Activated T-helper 1 cell treated with anti-CD3 and anti-CD28 coated beads, Interleukin-12 subunit alpha, Interleukin-12 subunit beta, Interleukin-2, Interleukin-4 antibody, amounts not matched to agents 30 ng/mL and 10 ng/mL and 1 ng/mL, durations not matched to agents 14 hours and 24 hours and 36 hours (primary cell): ENCODE measurements at regions of chr9 and their contacts with region 1.

Region 1: DNA sequence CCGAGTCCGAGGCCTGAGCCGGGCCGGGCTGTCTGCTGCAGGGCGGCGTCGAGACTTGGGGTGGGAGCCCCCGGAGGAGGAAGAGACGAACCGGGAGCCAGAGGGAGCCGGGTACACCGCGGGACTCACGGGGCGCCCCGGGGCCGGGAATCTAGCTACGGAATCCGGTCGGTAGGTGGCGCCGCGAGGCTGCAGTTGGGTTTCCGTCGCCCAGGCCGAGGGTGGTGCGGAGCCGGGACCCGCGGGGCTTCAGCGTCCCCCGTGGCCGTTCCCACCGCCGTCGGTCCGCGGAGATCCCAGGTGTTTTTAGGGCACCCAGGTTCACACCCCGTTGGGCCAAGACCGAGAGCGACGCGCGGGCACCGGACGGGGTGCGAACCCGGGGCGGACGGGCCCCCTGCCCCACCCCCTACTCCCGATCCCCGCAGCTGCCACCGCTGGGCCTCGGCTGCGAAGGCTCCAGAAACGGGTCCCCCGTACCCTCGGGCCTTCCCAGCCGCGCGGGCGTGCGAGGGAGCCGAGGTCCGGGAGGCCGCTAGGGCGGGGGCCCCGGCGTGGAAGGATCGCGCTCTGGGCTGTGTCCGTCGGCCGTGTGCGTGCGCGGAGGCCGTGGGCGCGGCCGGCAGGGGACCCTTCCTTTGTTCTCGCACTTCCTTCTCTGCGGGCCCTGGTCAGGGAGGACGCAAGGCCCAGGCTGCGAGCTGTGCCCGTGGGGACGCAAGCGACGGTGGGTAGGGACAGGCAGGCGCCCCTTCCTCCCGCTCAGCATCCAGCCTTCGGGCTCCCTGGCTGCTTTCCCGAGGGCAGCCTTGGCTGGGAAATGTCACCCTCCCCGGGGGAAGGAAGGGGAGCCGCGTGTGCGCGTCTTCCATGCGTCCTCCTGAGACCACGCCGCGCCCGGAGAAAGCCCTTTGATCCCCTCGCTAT is 146.6 kb downstream of the GAPVD1 start:
- DNase-seq: peak; percentile 53
- H3K4me3 Mint-ChIP-seq: peak overlapping the region; percentile 79
- H3K27ac Mint-ChIP-seq: no peak overlapping the region
- H3K4me1 Mint-ChIP-seq: peaks cover 7% of the 10 kb centered on the region
- H3K27me3 Mint-ChIP-seq: peaks cover 15% of the 10 kb centered on the region

Region 2: GRCh38 chr9:125558453-125559092 is 150.3 kb after region 1 on chr9:
- intact Hi-C with region 1: loop called (anchors 2 kb)
- DNase-seq: peak; percentile 31
- H3K4me3 Mint-ChIP-seq: no peak overlapping the region
- H3K27ac Mint-ChIP-seq: no peak overlapping the region
- H3K4me1 Mint-ChIP-seq: peaks cover 18% of the 10 kb centered on the region
- H3K27me3 Mint-ChIP-seq: no peaks in the 10 kb centered on the region

Region 3: GRCh38 chr9:126228781-126229444 is 820.7 kb after region 1 on chr9:
- intact Hi-C with region 1: loop called (anchors 1 kb)
- DNase-seq: peak; percentile 40
- H3K4me3 Mint-ChIP-seq: no peak overlapping the region
- H3K27ac Mint-ChIP-seq: no peak overlapping the region
- H3K4me1 Mint-ChIP-seq: peaks cover 6% of the 10 kb centered on the region
- H3K27me3 Mint-ChIP-seq: peaks cover 20% of the 10 kb centered on the region